Astrocyte of the cerebellum (primary cell): ENCODE measurements at regions of chr11 and their contacts with region 1.

Region 1: GRCh38 chr11:47004595-47005033 is 68.1 kb downstream of the CSTPP1 start:
- DNase-seq: peak; percentile 97
- H3K4me3 ChIP-seq: no peak overlapping the region
- CTCF ChIP-seq: no peak

Region 2: DNA sequence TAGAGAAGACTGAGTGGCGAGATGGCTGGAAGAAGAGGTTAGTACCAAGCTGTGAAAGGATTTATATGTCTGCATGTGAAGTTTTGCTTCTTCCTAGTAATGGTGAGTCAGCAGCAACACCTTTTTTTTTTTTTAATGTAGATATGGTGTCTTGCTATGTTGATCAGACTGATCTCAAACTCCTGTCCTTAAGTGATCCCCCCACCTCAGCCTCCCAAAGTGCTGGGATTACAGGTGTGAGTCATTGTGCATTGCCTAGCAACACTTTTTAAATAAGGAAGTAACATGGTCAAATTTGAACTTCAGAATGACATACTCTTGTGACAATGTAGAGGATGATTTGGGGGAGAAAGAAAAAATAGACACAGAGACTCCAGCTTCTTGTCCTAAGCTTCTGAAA is 74.5 kb before region 1 on chr11:
- in situ Hi-C with region 1: loop called (anchors 5 kb)
- DNase-seq: peak; percentile 33
- H3K4me3 ChIP-seq: no peak overlapping the region
- CTCF ChIP-seq: no peak

Region 3: GRCh38 chr11:47099214-47099917 is 94.8 kb after region 1 on chr11:
- in situ Hi-C with region 1: loop called (anchors 5 kb)
- DNase-seq: no peak
- H3K4me3 ChIP-seq: no peak overlapping the region
- CTCF ChIP-seq: no peak